Kidney (tissue), 22 donors: ENCODE measurements at regions of chr12 and their contacts with region 1.

Region 1: GRCh38 chr12:57621497-57622292 is 10.5 kb downstream of the ARHGEF25 start:
- DNase-seq: peak; percentile 69 to 84 (median 75)
- H3K4me3 ChIP-seq: peak overlapping the region in 2 of 3 donors; percentile 30 to 58
- H3K27ac ChIP-seq: no peak overlapping the region
- H3K4me1 ChIP-seq: peaks cover 0 to 16% (median 5%) of the 10 kb centered on the region in 3 donors
- H3K27me3 ChIP-seq: peaks cover 39% of the 10 kb centered on the region
- CTCF ChIP-seq: peak; percentile 80

Region 2: GRCh38 chr12:57462251-57462911 is 159.3 kb before region 1 on chr12:
- intact Hi-C with region 1: no loop called
- DNase-seq: peak; percentile 92 to 96 (median 94)
- H3K4me3 ChIP-seq: peak overlapping the region; percentile 60 to 84 (median 80)
- H3K27ac ChIP-seq: peak overlapping the region; percentile 51 to 84
- H3K4me1 ChIP-seq: peaks cover 0 to 8% (median 6%) of the 10 kb centered on the region in 3 donors
- H3K27me3 ChIP-seq: no peaks in the 10 kb centered on the region
- CTCF ChIP-seq: peak; percentile 94

Region 3: DNA sequence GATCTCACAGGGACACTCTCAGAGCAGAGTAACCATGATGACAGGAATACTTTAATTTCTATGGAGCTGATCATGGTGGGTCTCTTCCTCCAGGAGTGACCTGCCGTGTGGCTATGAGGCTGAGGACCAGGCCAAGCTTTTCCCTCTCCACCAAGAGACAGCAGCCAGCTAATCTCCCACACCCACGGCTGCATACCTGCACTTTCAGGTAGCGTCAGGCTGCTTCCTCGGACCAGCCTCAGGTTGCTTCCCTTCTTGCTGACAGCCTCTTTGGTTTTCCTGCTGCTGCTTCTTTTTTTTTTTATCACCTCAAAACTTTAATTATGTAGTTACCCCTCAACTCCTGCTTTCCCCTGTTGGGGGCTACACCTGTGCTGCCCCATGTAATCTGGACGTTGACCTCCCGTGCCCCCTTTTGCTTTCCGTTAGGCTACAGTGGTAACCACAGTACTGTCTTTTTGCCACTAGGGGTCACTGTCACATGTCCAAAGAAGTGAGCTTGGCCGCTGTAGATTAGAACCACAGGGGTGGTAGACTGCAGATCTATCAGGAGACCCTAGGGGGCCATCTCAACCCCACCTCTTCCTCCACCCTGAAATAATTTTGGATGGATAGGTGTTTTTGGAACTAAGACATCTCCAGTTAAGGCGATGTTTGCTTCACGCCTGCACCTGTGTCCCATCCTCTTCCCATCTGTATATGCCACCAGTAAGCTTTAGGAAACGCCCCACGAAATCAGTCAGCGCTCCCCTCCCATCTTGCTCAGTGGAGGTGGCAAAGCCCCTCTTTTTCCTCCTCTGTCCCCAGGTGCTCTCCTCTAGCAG is 38.5 kb before region 1 on chr12:
- intact Hi-C with region 1: loop called (anchors 5 kb)
- DNase-seq: peak in 4 of 5 donors; percentile 76 to 90 (median 84)
- H3K4me3 ChIP-seq: no peak overlapping the region
- H3K27ac ChIP-seq: no peak overlapping the region
- H3K4me1 ChIP-seq: no peaks in the 10 kb centered on the region
- H3K27me3 ChIP-seq: no peaks in the 10 kb centered on the region
- CTCF ChIP-seq: peak; percentile 98